ENCODE measurements at regions of chr14 and their contacts with region 1.

Region 1: DNA sequence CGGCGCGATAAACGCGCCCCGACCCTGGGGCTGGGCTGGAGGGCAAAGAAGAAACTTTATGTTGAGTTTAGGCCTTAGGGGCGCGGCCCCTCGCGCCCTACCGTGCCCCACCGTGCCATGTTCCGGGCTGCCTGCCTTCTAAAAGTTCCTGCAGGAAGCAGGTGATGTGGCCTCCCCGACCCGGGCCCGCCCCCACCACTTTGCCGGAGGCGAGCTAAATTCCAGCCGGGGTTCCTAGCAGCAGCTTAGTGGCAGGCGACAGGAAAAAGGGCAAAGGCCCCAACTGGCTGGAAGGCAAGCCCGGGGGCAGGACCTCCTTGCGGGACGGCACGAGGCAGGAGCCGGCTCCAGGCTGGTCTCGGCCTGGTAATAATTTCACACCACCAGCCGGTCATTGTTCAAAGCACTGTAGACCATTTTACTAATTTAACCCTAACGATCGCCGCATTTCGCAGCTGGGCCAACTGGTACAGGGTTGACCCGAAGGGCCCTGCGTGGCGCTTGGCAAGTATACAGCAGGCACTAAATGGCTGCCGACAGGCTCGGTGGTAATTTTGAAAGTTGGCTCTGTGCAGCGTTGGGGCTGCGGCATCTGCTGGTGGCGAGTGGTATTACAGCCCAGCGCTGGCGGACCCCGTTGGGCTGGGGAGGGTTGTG is 895 bp upstream of the CCDC88C start:
- DNase-seq: peak; percentile 84 to 89 (median 89)
- ATAC-seq: peak; percentile 70
- H3K4me3 ChIP-seq: no peak overlapping the region
- H3K4me1 ChIP-seq: peaks cover 26% of the 10 kb centered on the region
- CTCF ChIP-seq: peak; percentile 98

Region 2: GRCh38 chr14:91323671-91324605 is 94.6 kb before region 1 on chr14:
- intact Hi-C with region 1: loop called (anchors 5 kb)
- DNase-seq: peak; percentile 90 to 94 (median 90)
- ATAC-seq: peak; percentile 88
- H3K4me3 ChIP-seq: no peak overlapping the region
- H3K4me1 ChIP-seq: no peaks in the 10 kb centered on the region
- CTCF ChIP-seq: peak; percentile 91

Region 3: DNA sequence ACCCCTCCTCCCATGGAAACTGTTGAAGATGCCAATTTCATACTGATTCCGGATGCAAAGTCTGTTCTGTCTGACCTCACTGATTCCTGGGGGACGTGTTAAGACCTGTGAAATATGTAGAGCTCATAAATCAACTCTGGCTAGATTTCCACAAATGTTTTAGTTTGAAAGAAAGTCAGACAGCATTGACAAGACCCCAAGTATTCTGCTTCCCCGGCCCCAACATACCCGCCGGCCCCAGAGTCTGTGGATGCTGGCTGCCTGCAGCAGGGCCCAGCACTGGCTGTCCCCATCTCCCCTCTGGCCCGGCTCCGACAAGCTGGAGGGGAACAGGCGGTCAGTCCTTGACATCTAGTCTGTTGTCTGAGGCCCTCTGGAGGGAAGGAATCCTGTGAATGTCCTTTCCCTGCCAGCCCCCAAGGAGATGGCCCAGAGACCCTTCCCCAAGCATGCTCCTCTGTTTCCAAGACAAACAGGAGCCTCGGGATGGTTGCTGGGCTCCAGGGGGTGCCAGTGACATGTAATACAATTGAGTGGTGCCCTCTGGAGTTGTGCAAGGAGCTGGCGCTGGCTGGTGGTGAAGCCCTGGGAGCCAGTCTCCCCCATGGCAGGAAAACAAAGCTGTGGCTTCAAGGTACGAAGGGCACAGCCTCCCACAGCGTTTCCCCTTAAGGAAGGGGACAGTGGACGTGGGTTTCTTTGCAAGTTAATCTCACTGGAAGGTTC is 506.6 kb after region 1 on chr14:
- intact Hi-C with region 1: no loop called
- DNase-seq: no peak
- ATAC-seq: no peak
- H3K4me3 ChIP-seq: no peak overlapping the region
- H3K4me1 ChIP-seq: no peaks in the 10 kb centered on the region
- CTCF ChIP-seq: no peak